ENCODE measurements at regions of chr2 and their contacts with region 1.

Region 1: DNA sequence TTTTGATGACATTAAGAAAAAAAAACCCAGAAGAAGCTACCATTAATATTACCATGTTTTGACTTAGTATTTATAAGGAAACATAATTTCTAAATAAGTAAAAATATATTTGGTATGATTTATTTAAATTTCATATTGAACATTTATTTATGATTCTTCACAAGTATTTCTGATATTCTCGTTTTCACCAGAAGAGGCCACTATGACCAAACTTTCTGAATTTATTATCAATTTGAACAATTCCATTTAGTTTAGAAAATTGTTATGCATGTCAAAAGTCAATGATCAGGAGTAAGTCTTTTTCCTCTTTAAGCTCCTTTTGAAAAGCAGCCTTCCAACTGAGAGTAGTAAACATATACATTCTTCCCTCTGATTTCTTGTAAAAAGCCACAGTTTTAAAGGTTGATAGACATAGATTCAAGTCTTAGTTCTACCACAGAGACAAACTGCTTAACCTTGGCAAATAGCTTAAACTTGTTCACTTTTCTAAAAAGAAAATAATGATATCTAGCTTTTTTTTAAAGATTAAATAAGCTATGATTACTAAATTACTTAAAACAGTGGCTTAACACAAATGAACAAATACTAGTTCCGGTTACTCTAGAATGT is 329.9 kb downstream of the TRIB2 start:
- DNase-seq: no peak
- ATAC-seq: no peak
- H3K4me3 Mint-ChIP-seq: no peak overlapping the region
- H3K27ac Mint-ChIP-seq: no peak overlapping the region
- H3K4me1 Mint-ChIP-seq: no peaks in the 10 kb centered on the region
- H3K27me3 Mint-ChIP-seq: peaks cover 14% of the 10 kb centered on the region
- CTCF ChIP-seq: no peak

Region 2: DNA sequence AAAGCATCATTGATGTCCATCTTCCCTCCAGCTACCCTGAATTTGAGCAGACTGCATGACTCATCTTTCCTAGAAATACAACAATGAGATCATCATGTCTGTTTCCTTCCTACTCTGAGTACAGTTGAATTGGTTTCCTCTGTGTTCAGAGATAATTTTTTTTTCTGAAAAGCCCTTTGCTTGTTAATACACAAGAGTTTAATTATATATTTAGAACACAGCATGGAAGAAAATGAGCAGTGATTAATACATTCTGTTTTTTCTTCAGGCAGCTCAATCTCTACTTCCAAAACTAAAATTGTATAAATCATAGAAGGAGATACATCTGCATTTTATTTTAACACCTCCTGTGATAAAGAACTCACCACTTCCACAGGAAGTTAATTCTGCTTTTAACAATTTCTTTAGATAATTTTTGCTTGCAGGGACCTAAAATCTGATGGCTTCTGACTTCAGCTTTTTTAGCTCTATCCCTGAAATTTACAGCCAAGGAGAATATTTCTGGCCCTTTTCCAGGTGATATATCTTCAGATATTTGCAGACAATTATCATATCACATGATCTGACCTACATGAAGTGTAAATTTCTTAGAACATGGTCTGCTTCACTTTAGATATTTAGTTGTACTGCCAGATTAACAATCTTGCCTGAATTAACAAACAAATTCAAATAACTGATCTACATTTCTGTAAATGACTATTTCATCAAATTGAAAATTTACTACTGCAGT is 81.0 kb before region 1 on chr2:
- CTCF ChIA-PET with region 1: no interaction called
- POLR2A ChIA-PET with region 1: no interaction called
- intact Hi-C with region 1: no loop called
- DNase-seq: no peak
- ATAC-seq: no peak
- H3K4me3 Mint-ChIP-seq: no peak overlapping the region
- H3K27ac Mint-ChIP-seq: no peak overlapping the region
- H3K4me1 Mint-ChIP-seq: no peaks in the 10 kb centered on the region
- H3K27me3 Mint-ChIP-seq: peaks cover 23% of the 10 kb centered on the region
- CTCF ChIP-seq: no peak

Region 3: GRCh38 chr2:13252615-13253014 is 206.0 kb after region 1 on chr2:
- CTCF ChIA-PET with region 1: no interaction called
- POLR2A ChIA-PET with region 1: no interaction called
- intact Hi-C with region 1: no loop called
- DNase-seq: no peak
- ATAC-seq: no peak
- H3K4me3 Mint-ChIP-seq: no peak overlapping the region
- H3K27ac Mint-ChIP-seq: no peak overlapping the region
- H3K4me1 Mint-ChIP-seq: no peaks in the 10 kb centered on the region
- H3K27me3 Mint-ChIP-seq: no peaks in the 10 kb centered on the region
- CTCF ChIP-seq: no peak

Region 4: GRCh38 chr2:14903709-14904374 is 1857.2 kb after region 1 on chr2:
- CTCF ChIA-PET with region 1: no interaction called
- POLR2A ChIA-PET with region 1: no interaction called
- intact Hi-C with region 1: loop called (anchors 5 kb)
- DNase-seq: peak; percentile 16
- ATAC-seq: peak; percentile 58
- H3K4me3 Mint-ChIP-seq: no peak overlapping the region
- H3K27ac Mint-ChIP-seq: no peak overlapping the region
- H3K4me1 Mint-ChIP-seq: no peaks in the 10 kb centered on the region
- H3K27me3 Mint-ChIP-seq: no peaks in the 10 kb centered on the region
- CTCF ChIP-seq: no peak

Measured in activated B cell treated with CpG ODN at 0.5 μM for 24 hours (primary cell).